Heart left ventricle (tissue), 16 donors: ENCODE measurements at regions of chr6 and their contacts with region 1.

Region 1: DNA sequence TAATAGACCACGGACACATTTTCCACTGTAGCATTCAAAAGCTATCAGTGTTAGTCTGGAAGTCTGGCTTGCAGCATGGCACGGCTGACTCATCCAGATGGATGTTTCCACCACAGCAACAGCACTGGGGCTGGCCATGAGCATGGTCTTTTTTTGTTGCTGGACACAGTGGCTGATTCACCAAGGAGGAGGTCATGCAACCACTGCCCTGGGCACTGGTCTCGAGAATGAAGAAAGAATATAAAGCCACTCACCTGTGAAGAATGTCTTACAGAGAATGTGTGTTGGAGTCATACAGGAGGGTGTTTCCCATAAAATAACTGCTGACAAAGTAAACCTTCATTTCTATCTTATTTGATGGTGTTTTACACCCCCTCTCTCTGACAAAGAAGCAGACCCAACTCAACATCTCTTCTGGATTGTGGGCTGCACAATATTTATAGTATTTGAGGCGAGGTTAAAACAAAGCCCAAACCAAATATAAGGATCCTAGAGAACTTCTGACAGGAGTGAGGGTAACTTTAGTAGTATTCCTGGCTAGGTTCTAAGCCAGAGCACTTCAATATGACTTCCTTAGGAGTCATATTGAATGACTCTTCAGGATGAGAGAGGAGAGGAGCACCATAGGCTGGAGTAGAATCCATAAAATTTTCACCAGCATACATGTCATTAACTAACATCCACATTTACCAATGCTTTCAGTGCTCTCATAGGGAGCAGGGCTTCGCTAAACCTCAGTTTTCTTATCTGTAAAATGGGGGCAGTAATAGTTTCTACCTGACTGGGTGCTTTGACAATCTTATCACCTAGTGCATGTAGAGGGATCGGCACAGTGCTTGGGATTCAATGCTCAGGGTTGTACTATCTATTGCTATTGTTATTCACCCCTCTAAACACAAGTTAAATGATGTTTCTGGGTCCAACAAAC is 121.4 kb downstream of the KIF13A start:
- DNase-seq: peak; percentile 61 to 89 (median 66)
- ATAC-seq: peak; percentile 88 to 95 (median 92)
- H3K4me3 ChIP-seq: no peak overlapping the region
- H3K27ac ChIP-seq: peak overlapping the region; percentile 31 to 79 (median 70)
- H3K4me1 ChIP-seq: peaks cover 0 to 86% (median 52%) of the 10 kb centered on the region in 12 donors
- H3K27me3 ChIP-seq: no peaks in the 10 kb centered on the region
- CTCF ChIP-seq: no peak
- POLR2A ChIP-seq: no peak

Region 2: DNA sequence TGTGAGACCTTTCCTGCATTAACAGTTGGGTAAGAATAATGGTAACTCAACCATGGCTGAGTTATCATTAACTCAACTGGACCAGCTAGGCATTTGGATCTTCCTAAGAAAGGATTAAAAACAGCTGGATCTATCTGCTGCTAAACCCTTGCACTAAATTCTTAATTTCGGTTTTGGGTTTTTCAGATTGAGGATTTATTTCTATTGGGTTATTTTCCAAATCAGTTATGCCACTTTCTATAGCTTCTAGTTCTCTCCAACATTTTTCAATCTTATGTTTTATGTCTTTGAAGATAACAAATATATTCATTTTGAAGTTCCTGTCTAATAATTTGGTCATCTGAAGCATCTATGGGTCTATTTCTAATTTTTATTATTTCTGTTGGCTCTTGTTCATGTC is 28.8 kb after region 1 on chr6:
- intact Hi-C with region 1: no loop called
- DNase-seq: no peak
- ATAC-seq: no peak
- H3K4me3 ChIP-seq: no peak overlapping the region
- H3K27ac ChIP-seq: no peak overlapping the region
- H3K4me1 ChIP-seq: peaks cover 0 to 11% (median 0%) of the 10 kb centered on the region in 12 donors
- H3K27me3 ChIP-seq: no peaks in the 10 kb centered on the region
- CTCF ChIP-seq: no peak
- POLR2A ChIP-seq: no peak

Region 3: GRCh38 chr6:17907406-17908229 is 41.6 kb after region 1 on chr6:
- intact Hi-C with region 1: loop called in 2 of 10 experiments (anchors 5 kb)
- DNase-seq: peak in 4 of 5 donors; percentile 39 to 76 (median 53)
- ATAC-seq: peak in 3 of 4 donors; percentile 76 to 96 (median 89)
- H3K4me3 ChIP-seq: no peak overlapping the region
- H3K27ac ChIP-seq: peak overlapping the region in 9 of 12 donors; percentile 7 to 82 (median 35)
- H3K4me1 ChIP-seq: peaks cover 2 to 87% (median 46%) of the 10 kb centered on the region in 12 donors
- H3K27me3 ChIP-seq: no peaks in the 10 kb centered on the region
- CTCF ChIP-seq: no peak
- POLR2A ChIP-seq: no peak

Region 4: GRCh38 chr6:17923401-17923863 is 57.4 kb after region 1 on chr6:
- intact Hi-C with region 1: loop called in 3 of 10 experiments (anchors 5 to 10 kb)
- DNase-seq: no peak
- ATAC-seq: no peak
- H3K4me3 ChIP-seq: no peak overlapping the region
- H3K27ac ChIP-seq: peak overlapping the region in 10 of 12 donors; percentile 13 to 86 (median 62)
- H3K4me1 ChIP-seq: peaks cover 0 to 98% (median 64%) of the 10 kb centered on the region in 12 donors
- H3K27me3 ChIP-seq: no peaks in the 10 kb centered on the region
- CTCF ChIP-seq: no peak
- POLR2A ChIP-seq: no peak

Region 5: DNA sequence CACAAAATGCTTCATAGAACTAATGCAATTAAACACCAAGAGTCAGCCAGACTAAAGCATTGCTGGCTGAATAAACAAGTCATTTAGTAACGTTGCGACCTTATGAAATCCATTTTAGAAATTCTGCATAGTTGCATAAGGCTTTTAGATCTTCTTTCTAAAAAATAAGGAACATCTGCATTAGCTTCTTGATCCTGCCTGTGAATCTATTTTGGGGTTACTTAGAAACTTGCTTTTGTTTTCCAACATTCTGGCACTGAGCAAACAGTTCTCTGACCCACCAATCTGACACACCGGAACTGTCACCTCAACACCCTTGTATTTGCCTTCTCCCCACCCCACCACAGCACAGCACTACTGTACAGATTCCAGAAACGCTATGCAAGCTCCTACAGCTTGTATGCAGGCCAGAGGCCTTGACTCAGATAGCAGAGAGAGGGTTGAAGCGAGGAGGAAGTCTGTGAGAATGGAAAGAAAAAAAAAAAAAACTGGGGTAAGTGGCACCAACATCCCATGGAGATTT is 66.3 kb after region 1 on chr6:
- intact Hi-C with region 1: loop called in 3 of 10 experiments (anchors 5 to 10 kb)
- DNase-seq: peak in 4 of 5 donors; percentile 77 to 84 (median 82)
- ATAC-seq: peak; percentile 90 to 95 (median 92)
- H3K4me3 ChIP-seq: peak overlapping the region in 5 of 12 donors; percentile 6 to 19 (median 9)
- H3K27ac ChIP-seq: peak overlapping the region; percentile 75 to 90 (median 82)
- H3K4me1 ChIP-seq: peaks cover 9 to 98% (median 86%) of the 10 kb centered on the region in 12 donors
- H3K27me3 ChIP-seq: no peaks in the 10 kb centered on the region
- CTCF ChIP-seq: no peak
- POLR2A ChIP-seq: no peak